ENCODE measurements at regions of chr9 and their contacts with region 1.

Region 1: GRCh38 chr9:35790385-35791296 is 750 bp upstream of the NPR2 start:
- DNase-seq: peak; percentile 69
- ATAC-seq: peak; percentile 89
- H3K4me3 Mint-ChIP-seq: no peak overlapping the region
- H3K27ac Mint-ChIP-seq: no peak overlapping the region
- H3K4me1 Mint-ChIP-seq: peaks cover 11% of the 10 kb centered on the region
- H3K27me3 Mint-ChIP-seq: no peaks in the 10 kb centered on the region

Region 2: GRCh38 chr9:35470894-35471293 is 319.7 kb before region 1 on chr9:
- CTCF ChIA-PET with region 1: no interaction called
- DNase-seq: no peak
- ATAC-seq: no peak
- H3K4me3 Mint-ChIP-seq: no peak overlapping the region
- H3K27ac Mint-ChIP-seq: no peak overlapping the region
- H3K4me1 Mint-ChIP-seq: no peaks in the 10 kb centered on the region
- H3K27me3 Mint-ChIP-seq: peaks cover 49% of the 10 kb centered on the region

Region 3: DNA sequence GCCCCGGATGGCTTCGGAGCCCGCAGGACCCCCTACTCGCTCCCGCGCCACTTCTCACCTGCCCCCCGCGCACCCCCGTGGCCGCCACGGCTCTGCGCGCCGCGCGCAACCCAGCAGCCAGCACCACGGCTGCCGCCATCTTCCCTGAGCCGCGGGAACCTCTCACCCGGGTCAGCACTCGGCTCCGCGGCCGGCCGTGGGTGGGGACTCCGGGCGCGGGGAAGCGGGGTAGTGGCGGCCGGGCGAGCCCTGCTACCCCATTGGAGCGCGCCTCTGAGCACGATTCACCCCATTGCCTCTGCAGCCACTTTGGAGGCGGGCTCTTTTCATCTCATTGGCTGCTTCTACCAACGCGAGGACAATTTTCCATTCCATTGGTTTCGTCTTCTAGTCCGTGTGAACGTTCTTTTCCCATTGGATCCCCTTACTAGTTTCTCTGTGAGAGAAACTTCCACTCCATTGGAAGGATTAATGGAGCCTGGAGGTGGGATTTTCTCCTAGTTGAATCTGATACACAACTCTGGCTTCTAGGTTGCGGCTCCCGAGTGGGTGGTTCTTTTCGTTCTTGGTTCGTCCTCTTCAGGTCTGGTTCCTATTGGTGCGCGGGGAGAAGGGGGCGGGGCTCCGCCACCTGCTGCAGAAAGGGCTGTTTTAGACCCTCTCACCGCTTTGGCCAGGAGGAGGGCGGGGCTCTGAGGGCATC is 24.4 kb after region 1 on chr9 and contains the start of gene HINT2:
- CTCF ChIA-PET with region 1: interaction called, 10 read pairs
- DNase-seq: peak; percentile 100
- ATAC-seq: peak; percentile 83
- H3K4me3 Mint-ChIP-seq: peak within 1 kb of the TSS; percentile 84
- H3K27ac Mint-ChIP-seq: peak within 1 kb of the TSS; percentile 97
- H3K4me1 Mint-ChIP-seq: peaks cover 45% of the 10 kb centered on the region
- H3K27me3 Mint-ChIP-seq: peaks cover 2% of the 10 kb centered on the region
- total RNA-seq, gene HINT2: 68.9 to 73.5 TPM

Region 4: GRCh38 chr9:35829084-35829763 is 38.6 kb after region 1 on chr9 and contains the start of gene TMEM8B:
- CTCF ChIA-PET with region 1: interaction called, 74 read pairs
- DNase-seq: peak; percentile 96
- ATAC-seq: peak; percentile 95
- H3K4me3 Mint-ChIP-seq: peak within 1 kb of the TSS; percentile 87
- H3K27ac Mint-ChIP-seq: peak within 1 kb of the TSS; percentile 85
- H3K4me1 Mint-ChIP-seq: peaks cover 19% of the 10 kb centered on the region
- H3K27me3 Mint-ChIP-seq: peaks cover 4% of the 10 kb centered on the region
- total RNA-seq, gene TMEM8B: 1.2 to 3.5 TPM

Region 5: DNA sequence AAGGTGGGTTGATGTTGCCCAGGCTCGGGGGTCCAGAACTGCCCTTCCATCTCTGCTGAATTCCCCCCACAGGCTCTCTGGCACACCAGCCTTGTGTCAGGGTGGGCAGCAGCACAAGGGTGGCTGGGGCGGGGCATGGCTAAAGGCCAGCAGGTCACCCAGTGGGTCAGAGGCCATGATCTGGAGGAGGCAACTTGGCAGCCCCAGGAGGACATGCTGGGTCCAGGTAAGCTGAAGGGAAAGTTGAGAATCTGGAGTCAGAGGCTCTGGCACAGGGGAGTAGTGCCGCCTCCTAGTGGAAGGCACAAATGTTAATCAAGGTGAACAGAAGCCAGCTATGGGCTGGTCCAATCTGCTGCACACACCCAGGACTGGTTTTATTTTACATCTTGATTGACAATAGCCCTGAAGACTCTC is 44.6 kb after region 1 on chr9:
- CTCF ChIA-PET with region 1: interaction called, 12 read pairs
- DNase-seq: no peak
- ATAC-seq: peak; percentile 50
- H3K4me3 Mint-ChIP-seq: no peak overlapping the region
- H3K27ac Mint-ChIP-seq: no peak overlapping the region
- H3K4me1 Mint-ChIP-seq: peaks cover 5% of the 10 kb centered on the region
- H3K27me3 Mint-ChIP-seq: no peaks in the 10 kb centered on the region

Region 6: GRCh38 chr9:36029765-36030528 is 239.3 kb after region 1 on chr9:
- CTCF ChIA-PET with region 1: no interaction called
- DNase-seq: no peak
- ATAC-seq: no peak
- H3K4me3 Mint-ChIP-seq: no peak overlapping the region
- H3K27ac Mint-ChIP-seq: no peak overlapping the region
- H3K4me1 Mint-ChIP-seq: no peaks in the 10 kb centered on the region
- H3K27me3 Mint-ChIP-seq: peaks cover 43% of the 10 kb centered on the region

Measured in activated CD8-positive, alpha-beta memory T cell treated with anti-CD3 and anti-CD28 coated beads, Interleukin-2, amount 10 ng/mL, durations not matched to agents 7 days and 5 days (primary cell).